Posterior cingulate gyrus (tissue), 11 donors: ENCODE measurements at regions of chr9 and their contacts with region 1.

Region 1: DNA sequence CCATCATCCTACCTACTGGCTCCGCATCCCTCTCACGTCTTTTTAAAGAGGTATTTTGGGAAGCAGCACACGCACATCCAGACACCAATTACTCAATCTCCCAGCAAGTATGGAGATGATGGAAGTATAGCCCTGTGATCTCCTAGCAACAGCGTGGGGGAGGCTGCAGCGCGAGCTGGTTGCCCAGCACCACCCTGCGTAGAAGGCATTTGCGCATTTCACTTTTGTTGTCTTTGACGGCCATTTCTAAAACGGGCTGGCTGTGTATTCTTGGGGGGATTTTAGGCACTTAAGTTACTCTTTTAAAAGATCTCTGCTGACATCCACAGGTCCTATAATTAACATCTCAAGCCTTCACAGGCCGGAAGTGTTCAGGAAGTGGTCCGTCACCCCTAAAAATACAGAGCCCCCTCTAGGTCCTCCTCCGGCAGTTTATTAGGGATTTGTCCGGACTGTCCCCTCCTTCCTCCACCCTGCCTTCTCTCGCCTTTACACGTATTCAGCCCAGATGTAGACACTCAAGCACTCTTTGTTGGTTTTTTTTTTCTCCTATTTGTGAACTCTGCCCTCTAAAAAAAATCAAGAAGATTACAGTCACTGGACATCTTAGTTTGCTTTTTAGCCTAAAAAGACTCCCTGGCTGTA is 371.4 kb downstream of the NTRK2 start:
- DNase-seq: peak; percentile 65 to 98 (median 82)

Region 2: GRCh38 chr9:84990102-84990815 is 50.7 kb before region 1 on chr9:
- intact Hi-C with region 1: loop called (anchors 5 kb)
- DNase-seq: peak; percentile 33 to 94 (median 67)